Left colon (tissue), 2 donors: ENCODE measurements at regions of chr20 and their contacts with region 1.

Region 1: GRCh38 chr20:289693-290083 is 862 bp downstream of the C20orf96 start:
- DNase-seq: no peak
- ATAC-seq: peak; percentile 15

Region 2: DNA sequence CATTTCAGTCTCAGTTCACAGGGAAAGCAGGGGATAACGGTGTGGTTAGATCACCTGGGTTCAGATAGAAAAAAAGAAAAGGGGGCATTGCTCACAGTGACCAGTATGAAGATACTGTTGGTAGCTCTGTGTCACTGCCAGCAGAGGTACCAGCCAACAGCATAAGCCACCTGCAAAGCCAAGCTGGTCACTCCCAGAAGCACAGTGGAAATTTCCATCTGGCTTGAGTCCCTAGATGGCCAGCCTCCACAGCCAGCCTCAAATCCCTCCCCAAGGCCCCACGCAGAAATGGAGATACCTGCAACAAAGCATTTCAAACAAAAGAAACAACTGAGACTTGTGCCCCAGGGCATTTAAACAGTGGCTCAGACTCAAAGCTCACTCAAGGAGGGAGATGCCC is 120.8 kb before region 1 on chr20:
- intact Hi-C with region 1: no loop called
- DNase-seq: no peak
- ATAC-seq: no peak

Region 3: GRCh38 chr20:330233-331149 is 40.8 kb after region 1 on chr20:
- intact Hi-C with region 1: loop called in 1 of 2 experiments (anchors 10 kb)
- DNase-seq: peak in 1 of 2 donors; percentile 53
- ATAC-seq: peak; percentile 23